B cell (primary cell): ENCODE measurements at regions of chr22 and their contacts with region 1.

Region 1: DNA sequence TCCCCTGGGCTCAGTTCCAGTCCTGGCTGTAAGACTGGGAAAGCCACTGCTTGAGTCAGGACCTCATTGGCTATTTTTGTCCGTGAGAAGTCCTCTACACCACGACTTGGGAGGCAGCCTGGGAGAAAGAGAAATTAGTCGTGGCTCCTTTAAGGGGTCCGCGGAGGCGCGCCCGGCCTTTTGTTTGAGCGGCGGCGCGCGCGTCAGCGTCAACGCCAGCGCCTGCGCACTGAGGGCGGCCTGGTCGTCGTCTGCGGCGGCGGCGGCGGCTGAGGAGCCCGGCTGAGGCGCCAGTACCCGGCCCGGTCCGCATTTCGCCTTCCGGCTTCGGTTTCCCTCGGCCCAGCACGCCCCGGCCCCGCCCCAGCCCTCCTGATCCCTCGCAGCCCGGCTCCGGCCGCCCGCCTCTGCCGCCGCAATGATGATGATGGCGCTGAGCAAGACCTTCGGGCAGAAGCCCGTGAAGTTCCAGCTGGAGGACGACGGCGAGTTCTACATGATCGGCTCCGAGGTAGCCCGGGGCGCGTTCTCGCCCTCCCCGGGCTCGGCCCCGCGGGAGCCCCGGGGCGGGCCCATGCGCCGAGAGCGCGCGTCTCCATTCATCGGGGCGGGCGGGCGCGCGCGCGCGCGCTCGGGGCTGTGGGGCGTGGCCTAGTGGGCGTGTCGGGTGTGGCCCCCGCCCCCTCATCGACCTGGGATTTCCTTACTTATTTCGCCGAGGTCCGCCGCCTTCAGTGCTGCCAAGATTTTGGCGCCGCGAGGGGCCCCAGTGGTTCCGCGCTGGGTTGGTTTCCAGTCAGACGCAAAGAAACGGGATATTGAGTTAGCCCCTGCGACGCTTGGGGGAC is at the start of gene SMARCB1:
- DNase-seq: peak; percentile 94
- ATAC-seq: peak; percentile 85
- H3K4me3 ChIP-seq: peak within 1 kb of the TSS; percentile 72 to 95 (median 84)
- H3K4me3 Mint-ChIP-seq: peak within 1 kb of the TSS; percentile 95
- H3K27ac ChIP-seq: peak within 1 kb of the TSS; percentile 94 to 98
- H3K27ac Mint-ChIP-seq: peak within 1 kb of the TSS; percentile 91
- H3K4me1 ChIP-seq: peaks cover 48 to 58% of the 10 kb centered on the region in 2 donors
- H3K4me1 Mint-ChIP-seq: peaks cover 39% of the 10 kb centered on the region
- H3K27me3 ChIP-seq: no peaks in the 10 kb centered on the region
- H3K27me3 Mint-ChIP-seq: no peaks in the 10 kb centered on the region
- CTCF ChIP-seq: no peak
- total RNA-seq, gene SMARCB1: 179 and 187 TPM in 2 replicates

Region 2: GRCh38 chr22:23716811-23717801 is 69.9 kb before region 1 on chr22:
- CTCF ChIA-PET with region 1: no interaction called
- POLR2A ChIA-PET with region 1: interaction called, 4 read pairs
- intact Hi-C with region 1: loop called (anchors 1 kb)
- DNase-seq: peak; percentile 89
- ATAC-seq: peak; percentile 95
- H3K4me3 ChIP-seq: peak overlapping the region in 4 of 5 experiments; percentile 82 to 88 (median 88)
- H3K4me3 Mint-ChIP-seq: peak overlapping the region; percentile 89
- H3K27ac ChIP-seq: peak overlapping the region; percentile 61 to 84
- H3K27ac Mint-ChIP-seq: peak overlapping the region; percentile 89
- H3K4me1 ChIP-seq: peaks cover 13 to 19% of the 10 kb centered on the region in 2 donors
- H3K4me1 Mint-ChIP-seq: peaks cover 20% of the 10 kb centered on the region
- H3K27me3 ChIP-seq: no peaks in the 10 kb centered on the region
- H3K27me3 Mint-ChIP-seq: no peaks in the 10 kb centered on the region
- CTCF ChIP-seq: no peak

Region 3: GRCh38 chr22:23767673-23768548 is 19.1 kb before region 1 on chr22 and contains the start of gene CHCHD10:
- CTCF ChIA-PET with region 1: interaction called, 6 read pairs
- POLR2A ChIA-PET with region 1: interaction called, 3 read pairs
- intact Hi-C with region 1: loop called (anchors 1 kb)
- DNase-seq: peak; percentile 85
- ATAC-seq: peak; percentile 65
- H3K4me3 ChIP-seq: peak within 1 kb of the TSS; percentile 46 to 87 (median 81)
- H3K4me3 Mint-ChIP-seq: peak within 1 kb of the TSS; percentile 89
- H3K27ac ChIP-seq: peak within 1 kb of the TSS; percentile 80 to 89
- H3K27ac Mint-ChIP-seq: peak within 1 kb of the TSS; percentile 90
- H3K4me1 ChIP-seq: peaks cover 61 to 89% of the 10 kb centered on the region in 2 donors
- H3K4me1 Mint-ChIP-seq: peaks cover 66% of the 10 kb centered on the region
- H3K27me3 ChIP-seq: no peaks in the 10 kb centered on the region
- H3K27me3 Mint-ChIP-seq: no peaks in the 10 kb centered on the region
- CTCF ChIP-seq: peak; percentile 73
- total RNA-seq, gene CHCHD10: 54.0 and 57.2 TPM in 2 replicates

Region 4: DNA sequence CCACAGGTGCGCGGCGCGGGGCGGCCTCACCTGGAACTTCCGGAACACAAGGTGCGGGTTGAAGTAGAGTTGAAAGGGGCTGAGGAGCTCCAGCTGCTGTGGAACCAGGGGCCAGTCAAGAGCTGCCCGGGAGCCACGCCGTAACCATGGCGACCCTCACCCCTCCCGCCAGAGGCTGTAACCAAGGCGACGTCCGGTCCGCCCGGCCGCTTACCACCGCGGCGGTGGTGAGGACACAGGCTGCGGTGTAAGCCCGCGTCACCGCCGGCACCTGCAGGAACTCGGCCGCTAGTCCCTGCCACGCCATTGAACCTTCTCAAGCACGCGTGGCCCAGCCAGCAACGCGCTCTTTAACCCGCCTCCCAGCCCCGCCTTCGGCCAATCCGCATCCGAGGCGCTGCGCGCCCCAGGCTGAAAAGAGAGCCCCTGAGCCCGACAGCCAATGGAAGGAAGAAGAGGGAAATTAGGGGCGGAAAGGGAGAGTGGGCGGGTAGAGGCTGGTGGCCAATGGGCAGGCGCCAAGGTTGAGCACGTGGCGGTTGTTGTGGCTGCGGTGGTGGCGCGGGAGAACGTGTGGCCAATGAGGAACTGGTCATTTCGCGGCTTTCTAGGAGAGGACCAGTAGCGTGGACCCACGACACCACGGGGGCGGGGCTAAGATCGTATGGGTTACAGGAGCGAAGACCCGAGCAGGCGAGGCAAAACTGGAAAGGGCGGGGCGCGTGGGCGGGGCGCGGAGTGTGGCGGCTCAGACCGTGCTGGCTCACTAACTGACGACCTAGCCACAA is 51.9 kb after region 1 on chr22 and contains the start of gene DERL3:
- CTCF ChIA-PET with region 1: no interaction called
- POLR2A ChIA-PET with region 1: interaction called, 10 read pairs
- intact Hi-C with region 1: loop called (anchors 1 kb)
- DNase-seq: peak; percentile 100
- ATAC-seq: peak; percentile 78
- H3K4me3 ChIP-seq: peak within 1 kb of the TSS; percentile 38 to 83 (median 69)
- H3K4me3 Mint-ChIP-seq: peak within 1 kb of the TSS; percentile 89
- H3K27ac ChIP-seq: peak within 1 kb of the TSS; percentile 98
- H3K27ac Mint-ChIP-seq: peak within 1 kb of the TSS; percentile 99
- H3K4me1 ChIP-seq: peaks cover 45 to 60% of the 10 kb centered on the region in 2 donors
- H3K4me1 Mint-ChIP-seq: peaks cover 73% of the 10 kb centered on the region
- H3K27me3 ChIP-seq: no peaks in the 10 kb centered on the region
- H3K27me3 Mint-ChIP-seq: no peaks in the 10 kb centered on the region
- CTCF ChIP-seq: no peak
- total RNA-seq, gene DERL3: 74.1 and 77.0 TPM in 2 replicates

Region 5: DNA sequence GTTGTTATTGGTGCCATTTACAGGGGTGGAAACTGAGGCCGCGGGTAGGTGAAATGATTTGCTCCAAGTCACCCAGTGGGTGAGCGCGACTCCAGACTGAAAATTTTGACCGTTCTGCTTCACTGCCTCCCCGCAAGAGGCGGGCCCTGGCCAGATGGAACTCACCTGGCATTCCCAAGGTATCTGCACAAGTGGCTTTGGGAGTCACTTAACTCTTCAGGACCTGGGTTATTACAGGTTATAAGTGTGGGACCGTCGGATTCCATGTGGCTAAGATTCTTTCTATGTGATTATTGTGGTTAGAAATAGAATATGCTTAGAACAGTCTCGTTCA is 224.7 kb after region 1 on chr22:
- CTCF ChIA-PET with region 1: no interaction called
- POLR2A ChIA-PET with region 1: no interaction called
- intact Hi-C with region 1: loop called (anchors 10 kb)
- DNase-seq: no peak
- ATAC-seq: no peak
- H3K4me3 ChIP-seq: peak overlapping the region; percentile 77 to 88 (median 86)
- H3K4me3 Mint-ChIP-seq: peak overlapping the region; percentile 95
- H3K27ac ChIP-seq: peak overlapping the region in 1 of 2 donors; percentile 80
- H3K27ac Mint-ChIP-seq: peak overlapping the region; percentile 95
- H3K4me1 ChIP-seq: peaks cover 7 to 18% of the 10 kb centered on the region in 2 donors
- H3K4me1 Mint-ChIP-seq: peaks cover 28% of the 10 kb centered on the region
- H3K27me3 ChIP-seq: no peaks in the 10 kb centered on the region
- H3K27me3 Mint-ChIP-seq: no peaks in the 10 kb centered on the region
- CTCF ChIP-seq: no peak